ENCODE measurements at regions of chr17 and their contacts with region 1.

Region 1: GRCh38 chr17:42252528-42253172 is 23.5 kb downstream of the STAT5B start:
- DNase-seq: no peak
- ATAC-seq: no peak
- H3K4me3 ChIP-seq: no peak overlapping the region
- H3K27ac ChIP-seq: peak overlapping the region; percentile 54; the same call in 1 of the 3 replicates
- H3K4me1 ChIP-seq: peaks cover 21 to 34% of the 10 kb centered on the region in 2 experiments
- H3K27me3 ChIP-seq: no peaks in the 10 kb centered on the region
- CTCF ChIP-seq: no peak
- EP300 ChIP-seq: no peak
- POLR2A ChIP-seq: no peak
- RAD21 ChIP-seq: no peak

Region 2: DNA sequence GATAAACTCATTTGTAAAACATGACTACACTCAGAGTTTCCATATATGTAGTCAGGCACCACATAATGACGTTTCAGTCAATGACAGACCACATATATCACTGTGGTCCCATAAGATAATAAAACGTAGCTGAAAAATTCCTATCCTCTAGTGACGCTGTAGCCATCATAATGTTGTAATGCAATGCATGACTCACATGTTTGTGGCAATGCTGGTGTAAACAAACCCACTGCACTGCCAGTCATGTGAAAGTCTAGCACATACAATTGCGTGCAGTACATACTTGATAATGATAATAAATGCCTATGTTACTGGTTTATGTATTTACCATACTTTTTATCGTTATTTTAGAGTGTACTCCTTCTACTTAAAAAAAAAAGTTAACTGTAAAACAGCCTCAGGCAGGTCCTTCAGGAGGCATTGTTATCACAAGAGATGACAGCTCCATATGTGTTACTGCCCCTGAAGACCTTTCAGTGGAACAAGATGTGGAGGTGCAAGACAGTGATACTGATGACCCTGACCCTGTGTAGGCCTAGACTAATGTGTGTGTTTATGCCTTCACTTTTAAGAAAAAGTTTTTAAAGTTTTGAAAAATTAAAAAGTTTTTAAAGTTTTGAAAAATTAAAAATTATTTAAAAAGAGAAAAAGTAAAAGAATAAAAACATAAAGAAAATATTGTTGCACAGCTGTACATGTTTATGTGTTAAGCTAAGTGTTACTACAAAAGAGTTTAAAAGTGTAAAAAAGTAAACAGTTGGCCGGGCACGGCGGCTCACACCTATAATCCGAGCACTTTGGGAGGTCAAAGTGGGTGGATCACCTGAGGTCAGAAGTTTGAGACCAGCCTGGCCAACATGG is 14.5 kb after region 1 on chr17:
- CTCF ChIA-PET with region 1: no interaction called
- POLR2A ChIA-PET with region 1: interaction called, 11 read pairs
- in situ Hi-C with region 1: no loop called
- intact Hi-C with region 1: no loop called
- DNase-seq: peak; percentile 41 to 91 (median 50)
- ATAC-seq: peak; percentile 78
- H3K4me3 ChIP-seq: no peak overlapping the region
- H3K27ac ChIP-seq: peak overlapping the region; percentile 93
- H3K4me1 ChIP-seq: peaks cover 14 to 21% of the 10 kb centered on the region in 2 experiments
- H3K27me3 ChIP-seq: no peaks in the 10 kb centered on the region
- CTCF ChIP-seq: no peak
- EP300 ChIP-seq: peak; percentile 72
- POLR2A ChIP-seq: peak; percentile 79
- RAD21 ChIP-seq: peak in 1 of 2 experiments; percentile 5; a peak in 1 of 4 replicates

Region 3: DNA sequence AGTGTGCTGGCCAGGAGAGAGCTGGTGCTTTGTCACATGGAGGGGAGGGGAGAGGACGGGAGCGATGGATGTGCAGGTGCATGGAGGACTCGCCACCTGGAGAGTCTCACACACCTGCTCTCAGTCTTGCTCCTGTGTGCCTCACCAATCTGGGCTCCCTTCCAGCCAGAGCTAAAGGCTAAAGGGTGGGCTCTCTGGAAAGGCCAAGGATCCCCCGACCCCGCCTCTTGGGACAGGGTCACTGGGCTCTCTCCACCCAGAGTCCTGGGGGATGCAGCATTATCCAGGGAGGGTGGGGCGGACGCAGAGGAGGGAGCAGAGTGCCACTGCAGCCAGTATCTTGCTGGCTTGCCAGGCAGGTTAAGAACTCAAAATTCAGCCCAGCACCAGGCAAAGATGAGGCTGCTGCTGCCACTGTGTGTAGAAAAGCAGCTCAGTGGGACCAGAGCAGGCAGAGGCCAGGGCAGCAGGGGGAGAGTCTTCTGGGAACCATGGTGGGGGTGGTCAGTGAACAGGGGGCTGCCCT is 29.0 kb after region 1 on chr17:
- CTCF ChIA-PET with region 1: no interaction called
- POLR2A ChIA-PET with region 1: no interaction called
- in situ Hi-C with region 1: no loop called
- intact Hi-C with region 1: no loop called
- DNase-seq: peak in 1 of 4 experiments; percentile 8
- ATAC-seq: no peak
- H3K4me3 ChIP-seq: no peak overlapping the region
- H3K27ac ChIP-seq: peak overlapping the region; percentile 52; the same call in 2 of the 3 replicates
- H3K4me1 ChIP-seq: peaks cover 51 to 53% of the 10 kb centered on the region in 2 experiments
- H3K27me3 ChIP-seq: no peaks in the 10 kb centered on the region
- CTCF ChIP-seq: no peak
- EP300 ChIP-seq: no peak
- POLR2A ChIP-seq: 0 out of 2 replicates have a peak, but pooled peaks have one; percentile 2
- RAD21 ChIP-seq: no peak

Measured in K562 (cell line).